ENCODE measurements at regions of chr4 and their contacts with region 1.

Region 1: DNA sequence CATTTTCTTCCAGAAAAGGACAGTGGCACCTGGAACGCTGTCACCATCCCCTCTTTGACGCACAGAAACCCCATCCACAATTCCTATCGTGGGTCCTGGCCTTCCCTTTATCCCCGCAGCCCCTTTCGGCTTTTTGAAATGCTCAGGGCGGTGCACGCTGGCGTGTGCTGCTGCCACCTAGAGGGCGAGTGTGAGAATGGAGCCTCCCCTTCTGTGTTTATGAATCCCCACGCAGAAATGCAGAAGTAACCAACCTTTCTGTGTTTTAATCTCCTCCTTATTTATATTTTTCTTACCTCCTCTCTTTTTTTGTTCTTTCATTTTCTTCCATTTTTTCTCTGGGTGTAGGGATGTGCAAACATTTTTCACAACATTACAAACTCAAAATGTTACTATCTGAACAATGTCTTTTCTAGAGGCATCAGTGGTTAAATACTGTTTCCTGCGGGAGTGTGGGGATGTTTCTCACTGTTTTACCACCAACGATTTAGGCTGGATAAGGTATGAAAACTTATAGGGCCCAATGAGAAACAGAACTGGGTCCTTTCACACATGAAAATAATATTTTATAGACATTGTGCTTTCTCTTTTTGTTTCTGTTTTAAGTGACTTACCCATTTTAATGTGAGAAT is 50.0 kb downstream of the TMA16 start:
- DNase-seq: peak; percentile 72
- ATAC-seq: peak; percentile 93
- H3K4me3 Mint-ChIP-seq: no peak overlapping the region
- H3K27ac Mint-ChIP-seq: no peak overlapping the region
- H3K4me1 Mint-ChIP-seq: peaks cover 4% of the 10 kb centered on the region
- H3K27me3 Mint-ChIP-seq: no peaks in the 10 kb centered on the region

Region 2: DNA sequence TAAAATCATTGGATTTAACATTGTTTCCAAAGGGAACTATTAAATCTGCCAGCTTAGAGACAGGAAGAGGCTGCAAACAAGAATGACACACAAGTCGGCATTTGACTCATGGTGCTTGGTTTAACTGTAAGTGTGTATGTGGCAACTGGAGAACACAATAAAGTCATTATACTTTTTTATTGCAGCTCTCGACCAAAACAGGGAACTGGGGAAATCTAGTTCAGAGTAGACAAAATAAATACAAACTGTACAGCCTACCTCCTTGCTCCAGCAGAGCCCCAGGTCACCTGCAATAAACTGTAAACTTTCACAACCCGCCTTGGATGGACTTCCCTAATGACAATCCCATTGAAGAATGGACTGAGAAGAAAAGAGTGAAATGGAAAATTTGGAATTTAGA is 176.9 kb before region 1 on chr4:
- CTCF ChIA-PET with region 1: no interaction called
- DNase-seq: no peak
- ATAC-seq: no peak
- H3K4me3 Mint-ChIP-seq: no peak overlapping the region
- H3K27ac Mint-ChIP-seq: no peak overlapping the region
- H3K4me1 Mint-ChIP-seq: no peaks in the 10 kb centered on the region
- H3K27me3 Mint-ChIP-seq: no peaks in the 10 kb centered on the region

Region 3: DNA sequence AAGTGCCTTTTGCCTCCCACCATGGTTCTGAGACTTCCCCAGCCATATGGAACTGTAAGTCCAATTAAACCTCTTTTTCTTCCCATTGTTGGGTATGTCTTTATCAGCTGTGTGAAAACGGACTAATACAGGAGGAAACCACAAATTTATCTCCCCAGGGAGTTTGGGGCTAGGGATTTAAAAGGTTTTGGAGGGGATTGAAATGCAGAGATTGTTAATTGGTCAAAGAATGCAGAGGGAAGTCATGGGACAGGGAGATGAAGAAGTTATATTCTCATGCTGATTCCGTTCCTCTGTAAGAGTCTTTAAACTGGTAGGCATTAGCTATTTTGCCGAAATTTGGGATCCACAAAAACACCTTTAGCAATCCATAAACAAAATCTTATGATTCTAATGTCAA is 128.9 kb before region 1 on chr4:
- CTCF ChIA-PET with region 1: no interaction called
- DNase-seq: no peak
- ATAC-seq: no peak
- H3K4me3 Mint-ChIP-seq: no peak overlapping the region
- H3K27ac Mint-ChIP-seq: no peak overlapping the region
- H3K4me1 Mint-ChIP-seq: no peaks in the 10 kb centered on the region
- H3K27me3 Mint-ChIP-seq: peaks cover 3% of the 10 kb centered on the region

Region 4: DNA sequence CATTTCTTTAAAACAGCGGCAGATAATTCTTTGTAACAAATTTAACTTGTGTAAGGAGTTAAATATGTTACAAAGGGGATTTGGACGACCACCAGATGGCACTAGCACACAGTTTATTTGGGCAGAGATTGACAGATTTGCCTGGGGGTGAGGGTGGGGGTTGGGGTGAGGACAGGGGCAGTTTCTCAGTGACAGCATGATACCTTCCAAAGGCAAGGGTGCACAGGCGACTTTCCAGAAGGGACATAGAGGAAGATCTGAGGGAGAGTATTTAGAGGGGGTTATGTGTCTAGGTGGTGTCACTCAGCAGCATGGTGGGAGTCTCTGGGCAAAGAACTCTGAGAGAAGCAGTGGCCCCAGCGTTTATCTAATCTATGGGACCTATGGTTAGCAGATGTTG is 59.6 kb before region 1 on chr4:
- CTCF ChIA-PET with region 1: interaction called, 35 read pairs
- DNase-seq: peak; percentile 75
- ATAC-seq: peak; percentile 45
- H3K4me3 Mint-ChIP-seq: no peak overlapping the region
- H3K27ac Mint-ChIP-seq: no peak overlapping the region
- H3K4me1 Mint-ChIP-seq: peaks cover 4% of the 10 kb centered on the region
- H3K27me3 Mint-ChIP-seq: peaks cover 26% of the 10 kb centered on the region

Region 5: DNA sequence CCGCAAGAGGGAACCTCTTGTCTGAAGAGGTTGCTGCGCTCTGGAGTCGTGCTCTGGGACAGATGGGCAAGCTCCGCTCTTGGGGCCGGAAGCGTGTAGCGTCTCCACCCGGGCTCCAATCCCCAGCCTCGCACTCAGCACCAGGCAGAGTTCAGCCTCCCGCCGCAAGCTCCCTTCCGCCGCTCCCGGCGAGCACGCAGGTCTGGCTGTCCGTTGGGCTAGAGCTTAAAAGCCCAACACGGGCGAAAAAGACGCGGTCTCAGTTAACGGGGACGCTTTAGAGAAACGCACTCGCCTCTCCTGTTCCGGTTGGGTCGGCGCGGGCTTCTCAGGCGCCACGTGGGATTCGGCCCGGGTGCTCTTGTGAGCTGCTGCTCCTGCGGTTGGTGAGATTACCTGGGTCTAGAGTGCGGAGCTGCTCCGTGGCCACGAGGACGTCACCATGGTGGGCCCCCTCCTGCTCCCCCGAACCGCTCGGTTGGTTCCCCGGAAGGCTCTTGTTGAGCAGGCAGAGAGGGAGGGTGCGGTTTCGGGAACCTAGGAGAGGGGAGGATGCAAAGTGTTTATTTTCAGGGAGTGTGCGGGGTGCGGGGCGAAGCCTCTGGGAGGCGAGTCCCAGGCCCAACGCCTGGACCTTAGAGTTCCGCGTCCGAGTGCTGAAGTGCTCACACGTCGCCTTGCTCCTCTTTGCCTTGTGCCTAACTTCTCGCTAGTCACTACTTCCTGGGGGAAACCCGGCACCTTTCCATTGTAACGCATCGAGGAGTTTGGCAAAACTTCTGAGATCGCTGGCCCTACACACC is 50.0 kb before region 1 on chr4 and contains the start of gene TMA16:
- CTCF ChIA-PET with region 1: interaction called, 45 read pairs
- DNase-seq: peak; percentile 92
- ATAC-seq: peak; percentile 86
- H3K4me3 Mint-ChIP-seq: peak within 1 kb of the TSS; percentile 97
- H3K27ac Mint-ChIP-seq: peak within 1 kb of the TSS; percentile 97
- H3K4me1 Mint-ChIP-seq: peaks cover 31% of the 10 kb centered on the region
- H3K27me3 Mint-ChIP-seq: peaks cover 13% of the 10 kb centered on the region
- total RNA-seq, gene TMA16: 36.5 to 47.1 TPM

Region 6: DNA sequence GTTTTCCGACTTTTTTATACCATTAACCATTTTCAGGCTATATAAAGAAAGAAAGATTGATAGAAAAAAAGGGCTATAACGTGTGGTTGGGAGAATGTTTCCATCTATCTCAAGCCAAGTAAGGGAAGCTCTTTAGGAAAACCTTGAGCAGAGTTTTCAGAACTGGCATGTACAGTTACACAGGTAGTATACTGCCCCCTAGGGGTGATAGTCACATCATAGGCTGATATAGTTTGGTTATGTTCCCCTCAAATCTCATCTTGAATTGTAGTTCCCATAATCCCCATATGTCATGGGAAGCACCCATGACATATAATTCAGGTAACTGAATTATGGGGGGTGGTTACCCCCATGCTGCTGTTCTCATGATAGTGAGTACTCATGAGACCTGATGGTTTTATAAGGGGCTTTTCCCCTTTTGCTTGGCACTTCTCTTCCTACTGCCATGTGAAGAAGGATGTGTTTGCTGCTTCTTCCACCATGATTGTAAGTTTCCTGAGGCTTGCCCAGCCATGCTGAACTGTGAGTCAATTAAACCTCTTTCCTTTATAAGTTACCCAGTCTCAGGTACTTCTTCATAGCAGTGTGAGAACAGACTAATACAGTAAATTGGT is 136.8 kb after region 1 on chr4:
- CTCF ChIA-PET with region 1: interaction called, 22 read pairs
- DNase-seq: no peak
- ATAC-seq: peak; percentile 49
- H3K4me3 Mint-ChIP-seq: no peak overlapping the region
- H3K27ac Mint-ChIP-seq: no peak overlapping the region
- H3K4me1 Mint-ChIP-seq: no peaks in the 10 kb centered on the region
- H3K27me3 Mint-ChIP-seq: no peaks in the 10 kb centered on the region

Measured in activated CD8-positive, alpha-beta memory T cell treated with anti-CD3 and anti-CD28 coated beads, Interleukin-2, amount 10 ng/mL, durations not matched to agents 7 days and 5 days (primary cell).